K562 (cell line): ENCODE measurements at regions of chr17 and their contacts with region 1.

Region 1: DNA sequence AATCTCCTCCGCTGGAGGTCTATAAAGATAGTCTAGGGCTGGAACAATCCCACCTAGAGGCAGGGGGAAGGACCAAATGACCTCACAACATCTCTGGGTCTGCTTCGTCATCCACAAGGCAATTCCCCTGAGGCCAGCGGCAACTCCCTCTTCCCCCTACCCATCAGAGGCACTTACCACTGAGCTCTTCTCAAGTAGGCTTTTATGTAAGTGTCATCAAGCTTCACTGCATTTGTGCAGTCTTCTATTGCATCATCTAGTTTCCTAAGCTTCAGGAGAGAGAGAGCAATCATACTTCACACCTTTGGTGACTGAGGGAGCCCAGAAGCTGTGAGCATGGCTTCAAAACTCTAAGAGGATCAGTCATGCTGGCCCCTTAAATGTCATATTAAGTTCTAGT is 21.0 kb downstream of the CNP start:
- DNase-seq: no peak
- ATAC-seq: no peak; the same call in 2 of the 3 replicates
- H3K4me3 ChIP-seq: no peak overlapping the region
- H3K27ac ChIP-seq: no peak overlapping the region
- H3K4me1 ChIP-seq: no peaks in the 10 kb centered on the region
- H3K27me3 ChIP-seq: no peaks in the 10 kb centered on the region
- CTCF ChIP-seq: no peak
- EP300 ChIP-seq: no peak
- POLR2A ChIP-seq: no peak
- RAD21 ChIP-seq: no peak

Region 2: GRCh38 chr17:41548844-41549595 is 438.6 kb before region 1 on chr17:
- CTCF ChIA-PET with region 1: no interaction called
- POLR2A ChIA-PET with region 1: no interaction called
- in situ Hi-C with region 1: no loop called
- intact Hi-C with region 1: no loop called
- DNase-seq: peak; percentile 91 to 92 (median 91)
- ATAC-seq: peak; percentile 97
- H3K4me3 ChIP-seq: no peak overlapping the region
- H3K27ac ChIP-seq: peak overlapping the region; percentile 56; the same call in 2 of the 3 replicates
- H3K4me1 ChIP-seq: peaks cover 31 to 34% of the 10 kb centered on the region in 2 experiments
- H3K27me3 ChIP-seq: peaks cover 0 to 4% of the 10 kb centered on the region in 2 experiments; a peak in 1 of 5 replicates
- CTCF ChIP-seq: peak; percentile 93 to 95 (median 95); a peak in 5 of 6 replicates
- EP300 ChIP-seq: no peak
- POLR2A ChIP-seq: no peak
- RAD21 ChIP-seq: peak; percentile 89 to 95

Region 3: DNA sequence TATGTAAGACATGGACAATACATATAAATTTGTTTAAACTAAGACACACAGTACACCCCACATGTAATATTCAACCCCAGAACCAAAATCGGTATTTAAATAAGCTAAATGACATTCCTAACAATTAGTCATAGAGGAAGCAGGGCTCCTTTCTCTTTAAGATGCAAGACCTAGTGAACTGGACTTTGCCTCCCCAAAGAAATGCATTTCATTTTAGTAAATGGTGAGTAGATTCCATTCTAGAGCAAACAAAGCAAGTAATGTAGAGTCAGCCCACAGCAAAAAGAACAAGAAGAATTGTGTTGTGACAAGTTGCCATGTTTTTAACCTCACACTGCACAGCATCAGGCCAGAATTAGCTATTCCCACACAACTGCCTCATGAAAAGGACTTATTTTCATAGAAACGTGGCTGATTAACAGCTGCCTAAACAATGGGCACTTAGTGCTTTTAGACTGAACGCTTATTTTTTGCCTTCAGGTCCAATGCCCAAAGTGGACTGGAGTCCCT is 15.2 kb after region 1 on chr17:
- CTCF ChIA-PET with region 1: no interaction called
- POLR2A ChIA-PET with region 1: interaction called, 16 read pairs
- in situ Hi-C with region 1: no loop called
- intact Hi-C with region 1: no loop called
- DNase-seq: no peak
- ATAC-seq: no peak
- H3K4me3 ChIP-seq: no peak overlapping the region
- H3K27ac ChIP-seq: no peak overlapping the region
- H3K4me1 ChIP-seq: no peaks in the 10 kb centered on the region; a peak in 1 of 5 replicates
- H3K27me3 ChIP-seq: no peaks in the 10 kb centered on the region
- CTCF ChIP-seq: no peak
- EP300 ChIP-seq: no peak
- POLR2A ChIP-seq: no peak
- RAD21 ChIP-seq: no peak